B cell (primary cell): ENCODE measurements at regions of chr6 and their contacts with region 1.

Region 1: GRCh38 chr6:26216356-26216885 is 129.2 kb downstream of the HFE start:
- DNase-seq: peak; percentile 96
- ATAC-seq: peak; percentile 80
- H3K4me3 ChIP-seq: peak overlapping the region; percentile 70 to 93 (median 74)
- H3K4me3 Mint-ChIP-seq: no peak overlapping the region
- H3K27ac ChIP-seq: peak overlapping the region; percentile 81 to 82
- H3K27ac Mint-ChIP-seq: no peak overlapping the region
- H3K4me1 ChIP-seq: peaks cover 15 to 26% of the 10 kb centered on the region in 2 donors
- H3K4me1 Mint-ChIP-seq: peaks cover 19% of the 10 kb centered on the region
- H3K27me3 ChIP-seq: no peaks in the 10 kb centered on the region
- H3K27me3 Mint-ChIP-seq: no peaks in the 10 kb centered on the region
- CTCF ChIP-seq: no peak

Region 2: GRCh38 chr6:25485821-25486534 is 730.4 kb before region 1 on chr6:
- CTCF ChIA-PET with region 1: no interaction called
- POLR2A ChIA-PET with region 1: no interaction called
- intact Hi-C with region 1: no loop called
- DNase-seq: no peak
- ATAC-seq: no peak
- H3K4me3 ChIP-seq: no peak overlapping the region
- H3K4me3 Mint-ChIP-seq: no peak overlapping the region
- H3K27ac ChIP-seq: no peak overlapping the region
- H3K27ac Mint-ChIP-seq: no peak overlapping the region
- H3K4me1 ChIP-seq: peaks cover 0 to 3% of the 10 kb centered on the region in 2 donors
- H3K4me1 Mint-ChIP-seq: peaks cover 4% of the 10 kb centered on the region
- H3K27me3 ChIP-seq: no peaks in the 10 kb centered on the region
- H3K27me3 Mint-ChIP-seq: no peaks in the 10 kb centered on the region
- CTCF ChIP-seq: no peak

Region 3: DNA sequence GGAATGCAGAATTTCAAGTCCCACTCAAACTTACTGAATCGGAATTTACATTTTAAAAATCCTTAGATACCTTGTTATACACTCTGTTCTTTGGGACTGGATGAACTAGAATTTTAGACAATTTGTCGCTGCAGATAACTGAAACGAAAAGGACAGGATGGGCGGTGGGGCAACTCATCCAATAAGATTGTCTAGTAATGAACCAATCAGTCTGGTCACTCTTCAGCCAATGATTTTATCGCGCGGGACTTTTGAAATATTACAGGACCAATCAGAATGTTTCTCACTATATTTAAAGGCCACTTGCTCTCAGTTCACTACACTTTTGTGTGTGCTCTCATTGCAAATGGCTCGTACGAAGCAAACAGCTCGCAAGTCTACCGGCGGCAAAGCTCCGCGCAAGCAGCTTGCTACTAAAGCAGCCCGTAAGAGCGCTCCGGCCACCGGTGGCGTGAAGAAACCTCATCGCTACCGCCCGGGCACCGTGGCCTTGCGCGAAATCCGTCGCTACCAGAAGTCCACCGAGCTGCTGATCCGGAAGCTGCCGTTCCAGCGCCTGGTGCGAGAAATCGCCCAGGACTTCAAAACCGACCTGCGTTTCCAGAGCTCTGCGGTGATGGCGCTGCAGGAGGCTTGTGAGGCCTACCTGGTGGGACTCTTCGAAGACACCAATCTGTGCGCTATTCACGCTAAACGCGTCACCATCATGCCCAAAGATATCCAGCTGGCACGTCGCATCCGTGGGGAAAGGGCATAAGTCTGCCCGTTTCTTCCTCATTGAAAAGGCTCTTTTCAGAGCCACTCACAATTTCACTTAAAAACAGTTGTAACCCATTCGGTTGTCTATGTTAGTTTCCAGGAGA is 171.1 kb before region 1 on chr6:
- CTCF ChIA-PET with region 1: no interaction called
- POLR2A ChIA-PET with region 1: interaction called, 10 read pairs
- intact Hi-C with region 1: no loop called
- DNase-seq: peak; percentile 90
- ATAC-seq: peak; percentile 58
- H3K4me3 ChIP-seq: peak overlapping the region; percentile 56 to 98 (median 69)
- H3K4me3 Mint-ChIP-seq: peak overlapping the region; percentile 87
- H3K27ac ChIP-seq: peak overlapping the region; percentile 85 to 89
- H3K27ac Mint-ChIP-seq: peak overlapping the region; percentile 99
- H3K4me1 ChIP-seq: peaks cover 14 to 29% of the 10 kb centered on the region in 2 donors
- H3K4me1 Mint-ChIP-seq: peaks cover 17% of the 10 kb centered on the region
- H3K27me3 ChIP-seq: no peaks in the 10 kb centered on the region
- H3K27me3 Mint-ChIP-seq: no peaks in the 10 kb centered on the region
- CTCF ChIP-seq: no peak

Region 4: DNA sequence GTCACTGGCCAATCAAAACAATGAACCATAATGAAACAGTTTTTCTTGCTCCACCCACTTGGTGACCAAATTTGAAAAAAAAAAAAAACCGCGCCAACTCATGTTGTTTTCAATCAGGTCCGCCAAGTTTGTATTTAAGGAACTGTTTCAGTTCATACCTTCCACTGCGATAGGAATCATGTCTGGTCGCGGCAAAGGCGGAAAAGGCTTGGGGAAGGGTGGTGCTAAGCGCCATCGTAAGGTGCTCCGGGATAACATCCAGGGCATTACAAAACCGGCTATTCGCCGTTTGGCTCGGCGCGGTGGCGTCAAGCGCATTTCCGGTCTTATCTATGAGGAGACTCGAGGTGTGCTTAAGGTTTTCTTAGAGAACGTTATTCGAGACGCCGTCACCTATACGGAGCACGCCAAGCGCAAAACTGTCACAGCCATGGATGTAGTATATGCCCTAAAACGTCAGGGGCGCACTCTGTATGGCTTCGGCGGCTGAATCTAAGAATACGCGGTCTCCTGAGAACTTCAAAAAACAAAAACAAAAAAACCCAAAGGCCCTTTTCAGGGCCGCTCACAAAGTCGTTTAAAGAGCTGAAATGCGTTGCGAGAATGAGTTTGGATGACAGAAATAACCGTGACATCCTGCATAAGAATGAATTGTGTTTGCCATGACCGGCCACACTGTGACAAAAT is 112.5 kb before region 1 on chr6:
- CTCF ChIA-PET with region 1: no interaction called
- POLR2A ChIA-PET with region 1: interaction called, 12 read pairs
- intact Hi-C with region 1: no loop called
- DNase-seq: peak; percentile 98
- ATAC-seq: peak; percentile 87
- H3K4me3 ChIP-seq: peak overlapping the region; percentile 52 to 81 (median 62)
- H3K4me3 Mint-ChIP-seq: peak overlapping the region; percentile 88
- H3K27ac ChIP-seq: peak overlapping the region; percentile 78 to 79
- H3K27ac Mint-ChIP-seq: peak overlapping the region; percentile 99
- H3K4me1 ChIP-seq: peaks cover 5 to 15% of the 10 kb centered on the region in 2 donors
- H3K4me1 Mint-ChIP-seq: peaks cover 15% of the 10 kb centered on the region
- H3K27me3 ChIP-seq: no peaks in the 10 kb centered on the region
- H3K27me3 Mint-ChIP-seq: no peaks in the 10 kb centered on the region
- CTCF ChIP-seq: peak; percentile 66

Region 5: GRCh38 chr6:26183581-26184366 is 32.6 kb before region 1 on chr6:
- CTCF ChIA-PET with region 1: interaction called, 6 read pairs
- POLR2A ChIA-PET with region 1: interaction called, 25 read pairs
- intact Hi-C with region 1: no loop called
- DNase-seq: peak; percentile 84
- ATAC-seq: peak; percentile 89
- H3K4me3 ChIP-seq: peak overlapping the region; percentile 51 to 73 (median 71)
- H3K4me3 Mint-ChIP-seq: peak overlapping the region; percentile 91
- H3K27ac ChIP-seq: peak overlapping the region in 1 of 2 donors; percentile 61
- H3K27ac Mint-ChIP-seq: peak overlapping the region; percentile 85
- H3K4me1 ChIP-seq: peaks cover 13 to 22% of the 10 kb centered on the region in 2 donors
- H3K4me1 Mint-ChIP-seq: peaks cover 25% of the 10 kb centered on the region
- H3K27me3 ChIP-seq: no peaks in the 10 kb centered on the region
- H3K27me3 Mint-ChIP-seq: no peaks in the 10 kb centered on the region
- CTCF ChIP-seq: no peak

Region 6: GRCh38 chr6:26234421-26235296 is 18.2 kb after region 1 on chr6:
- CTCF ChIA-PET with region 1: interaction called, 15 read pairs
- POLR2A ChIA-PET with region 1: interaction called, 142 read pairs
- intact Hi-C with region 1: loop called (anchors 1 kb)
- DNase-seq: peak; percentile 87
- ATAC-seq: peak; percentile 76
- H3K4me3 ChIP-seq: peak overlapping the region; percentile 70 to 99 (median 85)
- H3K4me3 Mint-ChIP-seq: peak overlapping the region; percentile 93
- H3K27ac ChIP-seq: peak overlapping the region; percentile 86 to 90
- H3K27ac Mint-ChIP-seq: peak overlapping the region; percentile 95
- H3K4me1 ChIP-seq: peaks cover 13 to 21% of the 10 kb centered on the region in 2 donors
- H3K4me1 Mint-ChIP-seq: peaks cover 23% of the 10 kb centered on the region
- H3K27me3 ChIP-seq: no peaks in the 10 kb centered on the region
- H3K27me3 Mint-ChIP-seq: no peaks in the 10 kb centered on the region
- CTCF ChIP-seq: no peak

Region 7: DNA sequence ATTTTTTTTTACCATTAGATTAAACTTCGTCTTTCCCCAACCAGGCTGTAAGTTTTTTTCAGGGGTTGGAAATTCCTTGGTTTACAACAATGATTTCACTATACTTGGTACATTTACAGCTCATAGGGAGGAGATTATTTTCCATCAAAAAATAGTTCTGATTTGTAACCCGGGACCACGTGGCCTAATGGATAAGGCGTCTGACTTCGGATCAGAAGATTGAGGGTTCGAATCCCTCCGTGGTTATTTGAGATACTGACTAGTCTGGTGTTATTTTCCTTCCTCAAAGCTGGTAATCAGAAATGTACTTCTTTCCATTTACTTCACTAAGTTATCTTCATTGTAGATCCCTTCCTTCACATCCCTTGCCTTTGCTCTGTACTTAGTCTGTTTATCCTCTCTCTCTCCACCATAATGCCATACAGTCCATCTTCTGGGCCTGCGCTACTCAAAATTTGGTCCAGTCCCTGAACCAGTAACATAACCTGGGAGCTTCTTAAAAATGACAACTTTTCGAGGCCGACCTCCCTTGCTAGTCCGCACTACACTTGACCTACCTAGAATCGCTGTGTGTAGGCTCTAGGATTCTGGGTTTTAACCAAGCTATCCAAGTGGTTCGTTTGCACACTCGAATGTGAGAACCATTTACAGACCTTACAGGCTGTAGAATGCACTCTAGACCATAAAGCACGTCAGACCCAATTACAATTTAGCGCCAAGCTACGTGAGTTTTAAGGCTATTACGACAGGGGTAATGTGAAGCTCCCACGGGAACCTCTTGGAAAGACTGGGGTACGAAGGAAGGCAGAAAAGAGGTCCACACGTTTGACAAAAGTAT is 106.4 kb after region 1 on chr6:
- CTCF ChIA-PET with region 1: interaction called, 3 read pairs
- POLR2A ChIA-PET with region 1: no interaction called
- intact Hi-C with region 1: loop called (anchors 1 kb)
- DNase-seq: peak; percentile 83
- ATAC-seq: peak; percentile 59
- H3K4me3 ChIP-seq: peak overlapping the region in 4 of 5 experiments; percentile 49 to 74 (median 59)
- H3K4me3 Mint-ChIP-seq: peak overlapping the region; percentile 74
- H3K27ac ChIP-seq: no peak overlapping the region
- H3K27ac Mint-ChIP-seq: peak overlapping the region; percentile 70
- H3K4me1 ChIP-seq: peaks cover 14 to 31% of the 10 kb centered on the region in 2 donors
- H3K4me1 Mint-ChIP-seq: peaks cover 22% of the 10 kb centered on the region
- H3K27me3 ChIP-seq: peaks cover 0 to 43% (median 25%) of the 10 kb centered on the region in 4 experiments
- H3K27me3 Mint-ChIP-seq: peaks cover 26% of the 10 kb centered on the region
- CTCF ChIP-seq: no peak